A549 (cell line): ENCODE measurements at regions of chr10 and their contacts with region 1.

Region 1: GRCh38 chr10:119084896-119085295 is 4.3 kb upstream of the EIF3A start:
- DNase-seq: no peak
- ATAC-seq: no peak
- H3K4me3 ChIP-seq: no peak overlapping the region
- H3K27ac ChIP-seq: no peak overlapping the region
- H3K4me1 ChIP-seq: no peaks in the 10 kb centered on the region
- CTCF ChIP-seq: no peak
- EP300 ChIP-seq: no peak
- POLR2A ChIP-seq: no peak
- RAD21 ChIP-seq: no peak

Region 2: DNA sequence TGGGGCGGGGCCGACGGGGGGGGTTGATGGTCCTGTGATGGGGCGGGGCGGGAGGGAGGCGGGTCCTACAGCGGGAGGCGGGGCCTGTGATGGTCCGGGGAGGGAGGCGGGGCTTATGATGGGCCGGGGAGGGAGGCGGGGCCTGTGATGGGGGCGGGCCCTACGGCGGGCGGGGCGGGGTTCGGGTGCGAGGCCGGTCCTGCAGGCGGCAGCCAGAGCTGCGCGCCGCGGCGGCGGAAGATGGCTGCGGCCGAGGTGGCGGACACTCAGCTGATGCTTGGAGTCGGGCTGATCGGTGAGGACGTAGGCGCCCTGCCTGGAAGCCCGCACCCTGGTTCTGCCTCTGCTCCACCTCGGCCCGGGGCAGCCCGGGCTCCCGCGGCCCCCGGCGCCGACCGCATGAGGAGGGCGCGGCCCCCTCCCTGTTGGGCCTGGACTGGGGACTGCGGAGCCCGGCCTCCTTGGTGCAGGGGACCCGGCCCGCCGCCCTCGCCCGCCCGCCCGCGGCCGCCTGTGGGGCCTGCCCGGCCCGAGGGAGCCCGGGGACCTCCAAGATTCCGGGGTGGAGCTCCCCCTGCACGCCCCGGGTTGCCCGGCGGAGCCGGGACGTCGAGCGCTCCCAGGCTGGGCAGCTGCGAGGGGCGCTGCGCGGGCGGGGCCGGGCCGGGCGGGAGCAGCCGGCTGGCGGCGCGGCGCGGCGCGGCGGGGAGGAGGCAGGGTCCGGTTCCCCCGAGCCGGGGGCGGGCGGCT is 19.2 kb after region 1 on chr10 and contains the start of gene DENND10:
- CTCF ChIA-PET with region 1: interaction called, 20 read pairs
- POLR2A ChIA-PET with region 1: interaction called, 3 read pairs
- DNase-seq: peak; percentile 79 to 86
- ATAC-seq: peak; percentile 86 to 92
- H3K4me3 ChIP-seq: peak within 1 kb of the TSS; percentile 86
- H3K27ac ChIP-seq: peak within 1 kb of the TSS; percentile 88 to 99
- H3K4me1 ChIP-seq: peaks cover 17% of the 10 kb centered on the region; the same call in 2 of the 3 replicates
- CTCF ChIP-seq: no peak
- EP300 ChIP-seq: no peak
- POLR2A ChIP-seq: peak; percentile 98
- RAD21 ChIP-seq: 0 out of 5 replicates have a peak, but pooled peaks of 1 of the 2 experiments have one; percentile 15
- polyA plus RNA-seq, gene DENND10: 88.6 and 94.3 TPM in 2 replicates

Region 3: GRCh38 chr10:119235356-119235755 is 150.5 kb after region 1 on chr10:
- CTCF ChIA-PET with region 1: no interaction called
- POLR2A ChIA-PET with region 1: no interaction called
- DNase-seq: no peak
- ATAC-seq: no peak
- H3K4me3 ChIP-seq: no peak overlapping the region
- H3K27ac ChIP-seq: peak overlapping the region in 1 of 2 experiments; percentile 39; a peak in 1 of 6 replicates
- H3K4me1 ChIP-seq: peaks cover 28% of the 10 kb centered on the region
- CTCF ChIP-seq: no peak
- EP300 ChIP-seq: no peak
- POLR2A ChIP-seq: no peak
- RAD21 ChIP-seq: no peak